Heart left ventricle (tissue), 16 donors: ENCODE measurements at regions of chr6 and their contacts with region 1.

Region 1: GRCh38 chr6:125749173-125749864 is at the start of gene HEY2:
- DNase-seq: peak; percentile 96 to 97 (median 97)
- ATAC-seq: peak; percentile 82 to 97 (median 91)
- H3K4me3 ChIP-seq: peak within 1 kb of the TSS; percentile 56 to 89 (median 79)
- H3K27ac ChIP-seq: peak within 1 kb of the TSS; percentile 89 to 99 (median 94)
- H3K4me1 ChIP-seq: peaks cover 0 to 52% (median 2%) of the 10 kb centered on the region in 12 donors
- H3K27me3 ChIP-seq: peaks cover 0 to 81% (median 0%) of the 10 kb centered on the region in 9 donors
- CTCF ChIP-seq: peak in 2 of 12 donors; percentile 11 to 18
- POLR2A ChIP-seq: peak; percentile 84 to 97
- total RNA-seq, gene HEY2: 29.2 to 50.9 (median 40.6) TPM

Region 2: GRCh38 chr6:125363039-125363823 is 386.1 kb before region 1 on chr6:
- intact Hi-C with region 1: loop called in 6 of 10 experiments (anchors 2 to 5 kb)
- DNase-seq: peak; percentile 82 to 90 (median 88)
- ATAC-seq: peak; percentile 83 to 89 (median 86)
- H3K4me3 ChIP-seq: peak overlapping the region; percentile 26 to 62 (median 54)
- H3K27ac ChIP-seq: peak overlapping the region; percentile 39 to 94 (median 86)
- H3K4me1 ChIP-seq: peaks cover 0 to 36% (median 16%) of the 10 kb centered on the region in 12 donors
- H3K27me3 ChIP-seq: peaks cover 0 to 26% (median 0%) of the 10 kb centered on the region in 9 donors
- CTCF ChIP-seq: no peak
- POLR2A ChIP-seq: no peak

Region 3: GRCh38 chr6:125444006-125444923 is 305.1 kb before region 1 on chr6:
- intact Hi-C with region 1: loop called in 1 of 10 experiments (anchors 10 kb)
- DNase-seq: peak; percentile 74 to 84 (median 81)
- ATAC-seq: peak; percentile 82 to 94 (median 86)
- H3K4me3 ChIP-seq: peak overlapping the region in 1 of 12 donors; percentile 26
- H3K27ac ChIP-seq: peak overlapping the region; percentile 18 to 78 (median 52)
- H3K4me1 ChIP-seq: peaks cover 0 to 15% (median 4%) of the 10 kb centered on the region in 12 donors
- H3K27me3 ChIP-seq: no peaks in the 10 kb centered on the region
- CTCF ChIP-seq: no peak
- POLR2A ChIP-seq: no peak

Region 4: DNA sequence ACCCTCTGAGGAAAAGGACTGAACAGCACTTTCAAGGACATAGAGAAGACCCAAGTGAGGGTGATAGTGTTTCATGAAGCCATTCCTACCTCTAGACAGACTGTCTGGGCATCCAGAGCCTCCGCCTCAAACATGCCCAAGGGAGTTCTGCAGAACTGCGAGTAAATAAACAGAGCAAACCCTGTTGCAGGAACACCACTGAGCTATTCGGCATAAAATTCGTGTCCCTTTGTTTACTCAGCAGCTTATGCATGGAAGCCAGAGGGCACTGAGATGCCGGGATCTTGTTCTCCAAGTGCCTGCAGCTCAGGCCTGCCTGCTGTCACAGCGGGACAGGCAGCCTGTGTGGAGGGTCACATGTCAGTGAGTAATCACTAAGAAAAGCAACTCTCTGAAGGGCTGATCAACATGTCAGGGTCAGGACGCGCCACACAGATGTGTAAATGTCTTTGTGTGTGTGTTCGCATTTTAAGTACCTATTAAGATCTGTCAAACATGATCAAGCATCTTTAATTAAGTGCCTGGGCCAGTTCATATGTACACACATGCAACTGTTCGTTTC is 164.8 kb before region 1 on chr6:
- intact Hi-C with region 1: loop called in 9 of 10 experiments (anchors 1 to 10 kb)
- DNase-seq: peak; percentile 61 to 84 (median 74)
- ATAC-seq: peak; percentile 93 to 96 (median 94)
- H3K4me3 ChIP-seq: no peak overlapping the region
- H3K27ac ChIP-seq: peak overlapping the region in 11 of 12 donors; percentile 31 to 82 (median 65)
- H3K4me1 ChIP-seq: peaks cover 0 to 26% (median 3%) of the 10 kb centered on the region in 12 donors
- H3K27me3 ChIP-seq: no peaks in the 10 kb centered on the region
- CTCF ChIP-seq: peak in 7 of 12 donors; percentile 19 to 55 (median 33)
- POLR2A ChIP-seq: peak in 1 of 2 donors; percentile 17

Region 5: DNA sequence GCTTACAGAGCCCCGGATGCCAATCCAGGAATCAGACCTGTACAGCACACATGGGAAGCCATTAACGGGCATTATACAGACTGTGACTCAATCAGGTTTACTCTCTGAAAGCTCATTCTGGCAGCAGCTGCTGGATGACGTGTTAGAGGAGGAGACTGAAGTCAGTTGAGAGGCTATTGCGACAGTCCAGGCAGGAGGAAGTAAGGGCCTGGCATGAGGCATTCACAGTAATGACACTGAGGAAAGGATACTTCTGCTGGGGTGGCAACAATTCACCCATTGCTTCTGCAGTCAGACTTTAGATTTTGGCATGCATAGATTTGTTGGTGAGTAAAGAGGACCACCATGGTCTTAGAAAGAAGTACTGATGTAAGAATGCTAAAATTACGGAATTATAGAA is 150.9 kb before region 1 on chr6:
- intact Hi-C with region 1: loop called in 1 of 10 experiments (anchors 10 kb)
- DNase-seq: peak in 4 of 5 donors; percentile 20 to 88 (median 68)
- ATAC-seq: peak in 3 of 4 donors; percentile 86 to 96 (median 92)
- H3K4me3 ChIP-seq: no peak overlapping the region
- H3K27ac ChIP-seq: peak overlapping the region in 8 of 12 donors; percentile 17 to 75 (median 58)
- H3K4me1 ChIP-seq: peaks cover 0 to 19% (median 4%) of the 10 kb centered on the region in 12 donors
- H3K27me3 ChIP-seq: no peaks in the 10 kb centered on the region
- CTCF ChIP-seq: no peak
- POLR2A ChIP-seq: no peak

Region 6: DNA sequence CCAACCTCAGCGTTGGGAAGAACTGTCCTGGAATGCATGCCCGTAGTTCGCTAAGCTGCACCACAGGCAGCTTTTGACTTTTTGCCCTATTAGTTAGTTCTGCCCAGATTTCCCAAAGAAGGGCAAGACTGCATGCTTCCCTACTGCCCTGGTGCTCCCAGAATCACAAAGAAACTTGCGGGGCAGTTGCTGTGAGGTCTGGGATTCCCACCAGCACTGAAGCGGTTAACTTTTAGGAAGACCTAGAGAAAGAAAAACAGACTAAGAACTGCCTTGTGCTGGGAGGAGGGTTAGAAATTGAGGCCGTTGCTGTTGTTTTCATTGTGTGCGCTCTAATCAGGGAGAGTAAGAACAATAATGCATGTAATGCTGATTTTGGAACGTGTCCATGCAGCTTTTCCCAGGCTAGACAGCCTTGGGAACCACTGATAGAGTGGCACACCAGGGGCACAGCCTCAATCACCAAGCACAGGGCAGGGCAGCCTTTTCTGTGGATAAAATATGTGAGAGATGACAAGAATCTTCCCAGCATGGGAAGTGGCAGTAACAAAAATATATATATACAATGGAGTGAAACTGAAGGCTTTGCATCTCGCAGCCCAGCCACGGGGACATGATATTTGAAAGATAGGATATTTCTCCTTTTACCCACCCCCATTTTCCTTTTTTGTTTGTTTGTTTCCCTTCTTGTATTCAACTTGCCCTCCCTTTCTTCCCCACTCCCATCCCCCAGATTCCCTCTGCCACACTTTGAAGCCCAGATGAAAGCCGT is 137.6 kb before region 1 on chr6:
- intact Hi-C with region 1: loop called in 1 of 10 experiments (anchors 10 kb)
- DNase-seq: peak in 3 of 5 donors; percentile 27 to 35 (median 29)
- ATAC-seq: peak; percentile 63 to 83 (median 76)
- H3K4me3 ChIP-seq: peak overlapping the region in 9 of 12 donors; percentile 2 to 43 (median 32)
- H3K27ac ChIP-seq: peak overlapping the region in 10 of 12 donors; percentile 7 to 61 (median 42)
- H3K4me1 ChIP-seq: peaks cover 0 to 19% (median 8%) of the 10 kb centered on the region in 12 donors
- H3K27me3 ChIP-seq: no peaks in the 10 kb centered on the region
- CTCF ChIP-seq: no peak
- POLR2A ChIP-seq: no peak

Region 7: DNA sequence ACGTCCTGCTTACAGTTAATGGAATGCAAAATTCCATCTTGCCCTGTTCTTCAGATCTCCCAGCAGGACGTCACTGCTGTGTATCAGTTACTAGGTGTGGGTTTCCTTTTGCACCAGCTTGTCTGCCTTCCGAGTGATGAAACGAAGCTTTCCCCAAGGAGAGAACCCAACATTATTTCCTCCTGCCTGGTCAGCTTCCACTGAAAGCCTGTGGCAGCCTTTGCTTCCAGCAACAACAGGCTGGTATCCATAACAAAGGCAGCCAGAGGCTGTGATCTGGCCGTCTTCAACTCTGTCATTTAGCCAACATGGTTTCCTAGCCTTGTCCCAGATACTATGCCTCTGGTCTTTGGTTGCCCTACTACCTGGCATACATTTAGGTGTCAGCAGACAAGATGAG is 78.8 kb before region 1 on chr6:
- intact Hi-C with region 1: loop called in 3 of 10 experiments (anchors 5 kb)
- DNase-seq: peak in 4 of 5 donors; percentile 30 to 73 (median 60)
- ATAC-seq: peak; percentile 92 to 96 (median 96)
- H3K4me3 ChIP-seq: peak overlapping the region in 2 of 12 donors; percentile 10 to 20
- H3K27ac ChIP-seq: peak overlapping the region in 9 of 12 donors; percentile 14 to 74 (median 45)
- H3K4me1 ChIP-seq: peaks cover 0 to 10% (median 0%) of the 10 kb centered on the region in 12 donors
- H3K27me3 ChIP-seq: no peaks in the 10 kb centered on the region
- CTCF ChIP-seq: no peak
- POLR2A ChIP-seq: no peak